ENCODE measurements at regions of chr4 and their contacts with region 1.

Region 1: DNA sequence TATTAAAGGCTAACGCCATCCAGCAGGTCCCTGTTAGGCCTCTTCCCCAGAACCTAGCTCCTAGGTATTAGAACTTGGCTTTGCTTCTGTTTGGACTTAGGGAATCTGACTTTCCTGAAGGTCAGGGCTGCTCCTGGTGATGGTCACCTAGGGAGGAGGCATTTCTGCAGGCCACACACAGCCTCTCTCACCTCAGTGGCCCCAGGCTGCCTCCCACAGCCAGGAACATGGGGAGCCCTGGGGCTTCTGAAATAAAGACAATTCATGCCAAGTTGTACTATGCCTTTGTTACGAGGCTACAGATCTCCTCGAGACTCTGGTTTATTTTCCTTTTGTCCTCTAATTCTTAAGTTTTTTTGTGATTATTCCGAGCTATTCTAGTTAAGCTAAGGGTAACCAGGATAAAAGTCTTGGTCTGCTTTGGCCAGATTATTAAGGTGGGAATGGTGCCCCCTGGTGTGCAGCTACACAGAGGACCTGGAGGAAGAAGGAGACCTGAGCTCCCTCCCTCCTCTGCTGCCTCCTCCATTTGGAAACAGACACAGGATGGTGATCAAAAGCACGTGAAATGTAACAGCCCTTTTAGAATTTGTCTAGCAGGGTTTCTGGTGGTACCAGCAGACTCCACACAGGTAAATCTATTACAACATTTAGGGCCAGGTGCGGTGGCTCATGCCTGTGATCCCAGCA is 131.0 kb downstream of the DCLK2 start:
- DNase-seq: peak; percentile 73
- H3K4me3 ChIP-seq: no peak overlapping the region
- H3K27ac ChIP-seq: no peak overlapping the region
- H3K4me1 ChIP-seq: no peaks in the 10 kb centered on the region
- H3K27me3 ChIP-seq: no peaks in the 10 kb centered on the region
- CTCF ChIP-seq: peak; percentile 59 to 69
- POLR2A ChIP-seq: no peak

Region 2: DNA sequence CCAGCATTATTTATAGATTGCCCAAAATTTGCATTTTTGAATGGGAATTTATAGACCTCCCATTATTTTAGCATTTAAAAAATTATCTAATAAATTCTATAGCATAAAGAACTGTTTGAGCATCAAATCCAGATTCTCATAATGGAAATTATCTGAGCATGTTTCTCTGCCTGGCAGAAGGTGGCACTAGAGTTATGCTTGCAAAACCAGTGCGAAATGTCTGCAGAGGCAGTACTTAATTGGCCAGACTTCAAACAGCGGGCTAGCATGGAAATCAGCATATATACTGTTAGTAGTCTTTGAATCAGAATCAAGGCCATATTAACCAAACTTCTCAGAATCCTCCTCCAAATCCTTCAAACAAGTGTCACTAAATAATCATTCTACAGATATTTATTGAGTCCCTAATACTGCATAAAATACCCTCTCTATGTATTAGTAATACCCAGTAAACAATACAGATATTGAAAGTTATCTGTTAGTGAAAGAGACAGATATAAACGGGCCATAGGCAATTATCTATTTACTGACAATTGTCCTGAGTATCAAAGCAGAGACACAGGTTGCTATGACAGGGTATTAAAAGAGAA is 209.7 kb before region 1 on chr4:
- CTCF ChIA-PET with region 1: interaction called, 299 read pairs
- POLR2A ChIA-PET with region 1: no interaction called
- dilution Hi-C with region 1: no loop called
- intact Hi-C with region 1: loop called (anchors 1 kb)
- DNase-seq: peak; percentile 70
- H3K4me3 ChIP-seq: no peak overlapping the region
- H3K27ac ChIP-seq: no peak overlapping the region
- H3K4me1 ChIP-seq: no peaks in the 10 kb centered on the region
- H3K27me3 ChIP-seq: no peaks in the 10 kb centered on the region
- CTCF ChIP-seq: peak; percentile 59 to 61
- POLR2A ChIP-seq: no peak

Region 3: DNA sequence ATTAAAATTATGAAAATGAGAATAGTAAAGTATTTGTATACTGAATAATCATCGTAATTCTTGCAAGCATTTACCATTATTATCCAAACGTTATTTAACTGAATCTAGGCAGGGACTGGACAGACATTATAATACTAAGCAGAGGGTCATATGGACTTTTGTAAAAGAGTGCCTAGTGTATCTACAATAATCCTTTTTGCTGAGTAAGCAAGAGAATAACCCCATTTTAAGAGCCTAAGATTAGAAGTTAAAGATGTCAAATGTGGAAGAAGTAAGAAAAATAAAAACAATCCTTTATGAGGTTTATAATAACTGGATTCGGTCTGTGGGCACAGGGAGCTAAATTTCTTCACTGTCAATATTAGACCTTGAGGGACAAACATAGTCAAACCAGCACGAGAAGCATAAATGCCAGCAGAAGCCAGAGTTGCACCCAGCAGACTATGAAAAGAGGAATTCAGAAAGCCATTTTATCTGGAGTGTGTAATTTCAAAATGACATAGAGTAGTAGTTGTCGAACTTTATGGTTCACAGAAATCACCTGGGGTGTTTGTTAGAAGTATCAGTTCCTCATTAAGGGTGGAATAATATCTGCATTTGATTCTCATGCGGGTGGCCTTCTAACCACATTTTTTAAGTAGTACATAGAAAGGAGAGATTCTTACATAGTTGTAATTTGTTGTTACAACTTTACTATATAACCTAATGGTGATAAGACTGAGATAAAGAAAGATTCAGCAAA is 170.8 kb before region 1 on chr4:
- CTCF ChIA-PET with region 1: interaction called, 11 read pairs
- POLR2A ChIA-PET with region 1: no interaction called
- dilution Hi-C with region 1: no loop called
- intact Hi-C with region 1: no loop called
- DNase-seq: no peak
- H3K4me3 ChIP-seq: no peak overlapping the region
- H3K27ac ChIP-seq: no peak overlapping the region
- H3K4me1 ChIP-seq: no peaks in the 10 kb centered on the region
- H3K27me3 ChIP-seq: peaks cover 0 to 4% of the 10 kb centered on the region in 2 experiments
- CTCF ChIP-seq: no peak
- POLR2A ChIP-seq: no peak

Region 4: GRCh38 chr4:150078637-150079581 is 130.4 kb before region 1 on chr4:
- CTCF ChIA-PET with region 1: interaction called, 20 read pairs
- POLR2A ChIA-PET with region 1: no interaction called
- dilution Hi-C with region 1: no loop called
- intact Hi-C with region 1: loop called (anchors 1 kb)
- DNase-seq: peak; percentile 57
- H3K4me3 ChIP-seq: peak overlapping the region; percentile 47 to 65 (median 59)
- H3K27ac ChIP-seq: peak overlapping the region; percentile 35
- H3K4me1 ChIP-seq: peaks cover 9% of the 10 kb centered on the region
- H3K27me3 ChIP-seq: no peaks in the 10 kb centered on the region
- CTCF ChIP-seq: no peak
- POLR2A ChIP-seq: no peak

Region 5: GRCh38 chr4:150108691-150109090 is 100.6 kb before region 1 on chr4:
- CTCF ChIA-PET with region 1: interaction called, 39 read pairs
- POLR2A ChIA-PET with region 1: no interaction called
- dilution Hi-C with region 1: no loop called
- intact Hi-C with region 1: loop called (anchors 1 kb)
- DNase-seq: no peak
- H3K4me3 ChIP-seq: no peak overlapping the region
- H3K27ac ChIP-seq: no peak overlapping the region
- H3K4me1 ChIP-seq: no peaks in the 10 kb centered on the region
- H3K27me3 ChIP-seq: no peaks in the 10 kb centered on the region
- CTCF ChIP-seq: no peak
- POLR2A ChIP-seq: no peak

Region 6: DNA sequence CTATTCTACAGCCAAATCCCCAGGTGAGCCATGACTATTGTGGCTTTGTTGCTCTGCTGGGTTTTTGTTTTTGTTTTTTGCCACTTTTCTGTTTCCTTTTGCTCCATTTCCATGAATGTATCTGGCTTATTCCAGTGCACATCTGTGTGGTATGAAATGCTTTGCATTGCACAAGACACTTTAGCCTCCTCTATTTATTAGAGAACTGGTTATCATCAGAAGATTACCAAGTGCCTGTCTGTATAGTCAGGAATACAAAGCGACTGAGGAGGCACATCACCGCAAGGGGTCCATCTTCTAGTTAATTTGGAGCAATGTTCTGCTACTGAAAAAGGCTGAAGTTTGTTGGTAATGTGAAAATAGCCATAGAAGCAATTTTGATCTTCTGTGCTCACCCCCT is 10.2 kb before region 1 on chr4:
- CTCF ChIA-PET with region 1: interaction called, 20 read pairs
- POLR2A ChIA-PET with region 1: no interaction called
- dilution Hi-C with region 1: no loop called
- intact Hi-C with region 1: no loop called
- DNase-seq: no peak
- H3K4me3 ChIP-seq: no peak overlapping the region
- H3K27ac ChIP-seq: no peak overlapping the region
- H3K4me1 ChIP-seq: no peaks in the 10 kb centered on the region
- H3K27me3 ChIP-seq: no peaks in the 10 kb centered on the region
- CTCF ChIP-seq: no peak
- POLR2A ChIP-seq: no peak

Region 7: DNA sequence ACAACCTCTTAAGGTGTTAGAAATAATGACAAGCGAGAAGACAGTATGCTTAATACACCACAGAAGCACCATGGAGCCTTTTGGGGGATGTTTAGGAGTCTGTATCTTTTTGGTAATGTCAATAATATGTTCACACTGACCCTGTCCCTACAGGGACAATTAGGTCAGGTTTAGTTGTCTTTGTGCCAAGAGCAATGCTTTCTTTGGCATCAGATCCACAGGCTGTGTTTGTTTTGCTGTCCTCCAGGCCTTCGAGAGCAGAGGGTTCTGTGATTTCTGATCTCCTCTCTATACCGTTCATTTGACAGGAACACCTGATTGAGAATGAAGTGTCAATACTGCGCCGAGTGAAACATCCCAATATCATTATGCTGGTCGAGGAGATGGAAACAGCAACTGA is 22.7 kb after region 1 on chr4:
- CTCF ChIA-PET with region 1: interaction called, 17 read pairs
- POLR2A ChIA-PET with region 1: no interaction called
- dilution Hi-C with region 1: no loop called
- intact Hi-C with region 1: no loop called
- DNase-seq: peak; percentile 90
- H3K4me3 ChIP-seq: no peak overlapping the region
- H3K27ac ChIP-seq: no peak overlapping the region
- H3K4me1 ChIP-seq: peaks cover 40% of the 10 kb centered on the region
- H3K27me3 ChIP-seq: no peaks in the 10 kb centered on the region
- CTCF ChIP-seq: no peak
- POLR2A ChIP-seq: no peak

Region 8: DNA sequence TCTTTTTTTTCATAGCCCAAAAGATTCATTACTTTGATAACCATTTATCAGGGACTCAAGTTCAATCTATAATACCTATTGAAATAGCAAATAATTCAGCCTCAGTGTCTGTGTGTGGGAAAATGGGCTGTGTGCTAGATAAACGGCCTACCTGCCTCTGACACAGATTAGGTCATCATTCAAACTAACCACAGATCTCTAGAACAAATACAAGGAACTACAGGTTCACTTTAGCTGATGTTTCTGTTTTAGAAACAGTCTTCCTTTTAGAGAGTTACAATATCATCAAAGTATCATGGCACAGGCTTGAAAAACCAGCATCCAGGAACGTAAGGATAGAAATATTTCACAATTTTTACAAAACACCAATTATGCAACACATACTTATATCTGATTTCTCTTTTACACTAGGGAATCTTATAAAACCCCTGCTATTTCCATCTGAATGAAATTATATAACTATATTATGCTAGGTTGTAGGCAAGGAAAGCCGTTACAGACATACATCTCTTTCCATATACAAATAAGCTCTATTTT is 316.1 kb after region 1 on chr4:
- CTCF ChIA-PET with region 1: no interaction called
- POLR2A ChIA-PET with region 1: no interaction called
- dilution Hi-C with region 1: no loop called
- intact Hi-C with region 1: no loop called
- DNase-seq: no peak
- H3K4me3 ChIP-seq: no peak overlapping the region
- H3K27ac ChIP-seq: no peak overlapping the region
- H3K4me1 ChIP-seq: no peaks in the 10 kb centered on the region
- H3K27me3 ChIP-seq: no peaks in the 10 kb centered on the region
- CTCF ChIP-seq: no peak
- POLR2A ChIP-seq: no peak